ENCODE measurements at regions of chr19 and their contacts with region 1.

Region 1: GRCh38 chr19:47013041-47013517 is 6.6 kb upstream of the NPAS1 start:
- DNase-seq: peak; percentile 59
- H3K4me3 Mint-ChIP-seq: no peak overlapping the region
- H3K27ac Mint-ChIP-seq: peak overlapping the region; percentile 58
- H3K4me1 Mint-ChIP-seq: peaks cover 9% of the 10 kb centered on the region
- H3K27me3 Mint-ChIP-seq: peaks cover 2% of the 10 kb centered on the region

Region 2: DNA sequence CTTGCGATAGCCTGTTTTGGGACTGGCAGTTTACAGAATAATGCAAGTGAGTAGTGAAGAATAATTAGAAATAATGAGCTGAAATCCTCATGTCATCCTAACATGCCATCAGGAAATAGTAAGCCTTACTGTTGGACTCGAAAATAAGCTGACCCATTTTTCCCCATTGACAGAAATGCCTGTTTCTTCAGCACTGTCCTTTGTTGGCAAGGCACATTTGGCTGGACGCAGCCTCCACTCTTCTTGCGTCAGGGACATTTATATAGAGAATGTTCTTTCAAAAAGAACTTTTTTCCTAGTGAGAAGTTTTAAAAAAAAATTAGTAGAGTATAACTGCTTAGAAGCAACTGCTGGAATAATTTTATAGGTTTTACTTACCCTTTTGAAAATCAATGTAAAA is 105.2 kb before region 1 on chr19:
- CTCF ChIA-PET with region 1: no interaction called
- POLR2A ChIA-PET with region 1: no interaction called
- DNase-seq: no peak
- H3K4me3 Mint-ChIP-seq: no peak overlapping the region
- H3K27ac Mint-ChIP-seq: no peak overlapping the region
- H3K4me1 Mint-ChIP-seq: peaks cover 17% of the 10 kb centered on the region
- H3K27me3 Mint-ChIP-seq: no peaks in the 10 kb centered on the region

Region 3: GRCh38 chr19:47002107-47002766 is 10.8 kb before region 1 on chr19:
- CTCF ChIA-PET with region 1: interaction called, 12 read pairs
- POLR2A ChIA-PET with region 1: no interaction called
- DNase-seq: no peak
- H3K4me3 Mint-ChIP-seq: no peak overlapping the region
- H3K27ac Mint-ChIP-seq: no peak overlapping the region
- H3K4me1 Mint-ChIP-seq: peaks cover 3% of the 10 kb centered on the region
- H3K27me3 Mint-ChIP-seq: peaks cover 21% of the 10 kb centered on the region

Region 4: GRCh38 chr19:47035127-47036096 is 22.3 kb after region 1 on chr19:
- CTCF ChIA-PET with region 1: interaction called, 12 read pairs
- POLR2A ChIA-PET with region 1: no interaction called
- DNase-seq: peak; percentile 93
- H3K4me3 Mint-ChIP-seq: peak overlapping the region; percentile 79
- H3K27ac Mint-ChIP-seq: peak overlapping the region; percentile 74
- H3K4me1 Mint-ChIP-seq: peaks cover 19% of the 10 kb centered on the region
- H3K27me3 Mint-ChIP-seq: peaks cover 20% of the 10 kb centered on the region